ENCODE measurements at regions of chr1 and their contacts with region 1.

Region 1: DNA sequence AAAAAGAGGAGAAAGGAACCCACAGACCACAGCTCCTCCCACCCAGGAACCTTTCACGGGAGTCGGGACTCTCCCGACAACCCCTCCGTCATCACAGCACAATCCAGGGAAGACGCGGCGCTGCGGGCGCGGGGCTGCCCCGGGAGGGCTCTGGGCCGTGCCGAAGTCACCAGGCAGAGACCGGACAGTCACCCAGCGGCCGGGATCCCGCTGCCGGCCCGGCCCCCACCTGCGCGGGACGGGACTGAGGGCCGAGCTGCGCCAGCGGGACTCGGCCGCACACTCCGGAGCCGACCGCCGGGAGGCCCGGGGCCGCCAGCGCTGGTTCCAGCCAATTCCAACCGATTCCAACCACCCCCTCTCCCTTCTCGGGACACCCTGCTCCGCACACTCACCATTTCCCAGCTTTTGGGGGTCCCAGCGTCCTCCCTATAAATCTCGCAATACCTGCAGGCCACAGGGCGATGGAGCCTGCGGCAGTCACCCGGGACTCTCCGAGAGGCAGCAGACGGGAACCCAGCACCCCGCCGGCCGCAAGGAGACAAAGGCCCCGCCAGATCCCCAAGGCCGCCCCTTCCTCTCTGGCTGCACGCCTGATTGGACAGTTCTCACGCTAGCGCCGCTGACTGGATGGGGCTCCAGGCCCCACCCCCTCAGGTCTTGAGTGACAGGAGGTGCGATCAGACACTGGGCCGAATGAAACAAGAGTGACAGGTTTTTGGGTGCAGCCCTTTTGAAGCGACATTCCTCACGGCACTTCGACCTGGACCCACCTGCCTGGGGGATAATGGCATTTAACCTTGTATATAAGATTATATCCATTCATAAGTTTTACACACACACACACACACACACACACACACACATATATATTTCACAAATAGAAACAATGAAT is at the start of gene ZNF695:
- DNase-seq: peak; percentile 89 to 95
- H3K4me3 ChIP-seq: peak within 1 kb of the TSS; percentile 90
- H3K27ac ChIP-seq: no peak within 1 kb of the TSS
- H3K4me1 ChIP-seq: no peaks in the 10 kb centered on the region
- H3K27me3 ChIP-seq: no peaks in the 10 kb centered on the region
- CTCF ChIP-seq: no peak
- total RNA-seq, gene ZNF695: 9.5 and 9.8 TPM in 2 replicates

Region 2: DNA sequence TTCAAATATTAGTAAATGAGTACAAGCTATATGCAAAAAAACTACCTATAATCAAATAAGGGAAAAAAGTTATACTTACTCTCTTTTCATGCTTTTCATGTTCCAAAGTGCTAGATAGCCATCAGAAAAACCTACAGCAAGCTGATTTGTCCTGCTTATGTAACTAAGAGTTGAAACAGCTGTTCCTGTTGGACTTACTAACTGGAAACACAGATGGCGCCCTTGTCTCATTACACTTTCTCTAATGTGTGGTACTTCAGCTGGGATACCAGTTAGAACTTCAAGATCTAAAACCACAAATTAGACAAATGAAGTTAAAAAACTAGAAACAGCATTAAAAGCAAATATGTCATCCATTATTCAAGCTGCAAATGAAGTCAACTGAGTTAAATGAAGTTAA is 100.3 kb before region 1 on chr1:
- CTCF ChIA-PET with region 1: no interaction called
- POLR2A ChIA-PET with region 1: interaction called, 32 read pairs
- intact Hi-C with region 1: no loop called
- DNase-seq: no peak
- H3K4me3 ChIP-seq: no peak overlapping the region
- H3K27ac ChIP-seq: no peak overlapping the region
- H3K4me1 ChIP-seq: no peaks in the 10 kb centered on the region
- H3K27me3 ChIP-seq: no peaks in the 10 kb centered on the region
- CTCF ChIP-seq: no peak; the same call in 1 of the 2 replicates

Region 3: DNA sequence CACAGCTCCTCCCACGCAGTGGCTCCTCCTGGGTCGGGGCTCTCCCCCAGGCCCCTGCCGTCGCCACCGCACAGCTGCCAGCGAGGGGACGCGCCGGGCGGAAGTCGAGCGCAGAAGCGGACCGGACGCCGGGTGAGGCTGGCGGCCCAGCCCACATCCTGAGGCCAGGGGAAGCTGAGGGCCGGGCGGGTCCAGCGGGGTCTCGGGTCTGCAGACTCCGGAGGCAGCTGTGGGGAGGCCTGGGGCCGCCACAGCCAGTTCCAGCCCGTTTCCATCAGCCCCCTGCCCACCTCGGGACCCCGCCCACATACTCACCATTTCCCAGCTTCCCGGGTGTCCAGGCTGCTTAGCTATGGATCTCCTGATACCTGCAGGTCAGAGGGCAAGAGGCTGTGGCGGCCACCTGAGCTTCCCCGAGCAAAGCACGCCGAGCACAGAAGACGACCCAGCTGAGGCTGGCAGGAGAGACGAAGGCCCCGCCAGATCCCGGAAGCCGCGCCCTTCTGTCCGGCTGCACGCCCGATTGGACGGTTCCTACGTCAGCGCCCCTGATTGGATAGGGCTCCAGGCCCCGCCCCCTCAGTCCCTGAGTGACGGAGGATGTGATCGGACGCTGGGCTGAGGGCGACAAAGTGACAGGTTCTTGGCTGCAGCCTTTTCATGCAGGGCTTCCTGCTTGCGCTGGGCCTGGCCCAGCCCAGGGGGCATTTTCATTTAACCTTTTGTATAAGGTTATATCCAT is 202.8 kb after region 1 on chr1:
- CTCF ChIA-PET with region 1: no interaction called
- POLR2A ChIA-PET with region 1: no interaction called
- intact Hi-C with region 1: loop called (anchors 1 kb)
- DNase-seq: peak; percentile 84 to 96
- H3K4me3 ChIP-seq: peak overlapping the region; percentile 90
- H3K27ac ChIP-seq: 0 out of 2 replicates have a peak overlapping the region, but pooled peaks have one; percentile 34
- H3K4me1 ChIP-seq: peaks cover 9% of the 10 kb centered on the region; the same call in 1 of the 2 replicates
- H3K27me3 ChIP-seq: no peaks in the 10 kb centered on the region
- CTCF ChIP-seq: no peak

Measured in PC-9 (cell line).